ENCODE measurements at regions of chr4 and their contacts with region 1.

Region 1: DNA sequence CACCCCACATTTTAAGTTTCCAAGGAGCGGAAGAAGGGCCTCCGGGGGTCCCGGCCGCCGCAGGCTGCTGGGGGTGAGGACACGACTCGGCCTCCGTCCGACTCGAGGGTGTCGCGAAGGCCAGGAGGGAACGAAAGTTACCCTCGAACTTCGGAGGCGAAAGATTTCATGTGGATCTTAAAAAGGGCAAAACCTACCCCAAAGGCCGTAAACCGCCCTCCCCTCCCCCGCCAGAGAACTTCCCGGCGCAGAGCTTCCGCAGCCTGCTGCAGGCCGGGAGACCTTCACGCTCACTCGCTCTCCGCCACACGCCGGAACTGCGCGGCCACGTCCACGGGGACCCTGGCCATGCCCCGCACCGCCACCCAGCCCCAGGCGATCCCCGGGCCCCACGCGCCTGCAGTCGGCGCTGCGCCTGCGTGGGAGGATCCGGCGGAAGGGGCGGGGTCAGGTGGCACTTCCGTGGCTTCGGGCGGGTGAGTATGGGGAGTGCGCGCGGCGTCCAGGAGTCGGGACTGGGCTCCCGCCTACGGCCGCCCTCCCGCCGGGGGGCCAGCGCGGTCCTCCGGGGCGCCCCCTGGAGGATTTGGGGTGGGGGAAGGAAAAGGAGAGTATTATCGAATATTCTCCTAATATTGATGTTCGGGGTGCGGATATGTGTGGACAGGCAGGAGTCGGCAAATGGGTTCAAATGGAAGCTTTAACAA is at the start of gene MMAA:
- DNase-seq: peak in 1 of 2 donors; percentile 93
- H3K4me3 ChIP-seq: peak within 1 kb of the TSS; percentile 81 to 84
- H3K27ac ChIP-seq: peak within 1 kb of the TSS; percentile 93
- H3K4me1 ChIP-seq: peaks cover 8% of the 10 kb centered on the region
- H3K27me3 ChIP-seq: no peaks in the 10 kb centered on the region
- CTCF ChIP-seq: peak in 2 of 3 experiments; percentile 51 to 55
- POLR2A ChIP-seq: peak in 1 of 2 donors; percentile 91
- total RNA-seq, gene MMAA: 3.9 TPM

Region 2: GRCh38 chr4:145125396-145125795 is 493.7 kb before region 1 on chr4:
- intact Hi-C with region 1: no loop called
- DNase-seq: no peak
- H3K4me3 ChIP-seq: no peak overlapping the region
- H3K27ac ChIP-seq: no peak overlapping the region
- H3K4me1 ChIP-seq: no peaks in the 10 kb centered on the region
- H3K27me3 ChIP-seq: no peaks in the 10 kb centered on the region
- CTCF ChIP-seq: no peak
- POLR2A ChIP-seq: no peak

Region 3: DNA sequence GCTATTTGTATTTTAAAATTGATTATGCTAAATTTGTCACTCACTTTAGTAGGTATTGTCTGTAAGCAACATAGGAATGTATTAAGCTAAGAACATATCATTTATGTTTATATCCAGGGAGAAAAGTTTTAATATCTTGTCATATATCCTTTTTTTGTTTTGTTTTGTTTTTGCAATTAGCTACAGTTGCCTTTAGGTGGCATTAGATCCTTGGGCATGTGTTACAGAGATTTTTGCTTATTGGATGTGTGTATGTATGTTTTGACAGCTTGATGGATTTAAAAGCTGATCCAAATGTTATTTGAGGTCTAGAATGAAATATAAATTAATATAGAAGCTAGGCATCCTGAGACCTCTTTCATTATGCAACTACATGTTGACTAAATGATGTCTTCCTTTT is 402.6 kb before region 1 on chr4:
- intact Hi-C with region 1: loop called (anchors 10 kb)
- DNase-seq: no peak
- H3K4me3 ChIP-seq: no peak overlapping the region
- H3K27ac ChIP-seq: no peak overlapping the region
- H3K4me1 ChIP-seq: no peaks in the 10 kb centered on the region
- H3K27me3 ChIP-seq: no peaks in the 10 kb centered on the region
- CTCF ChIP-seq: no peak
- POLR2A ChIP-seq: no peak

Region 4: GRCh38 chr4:145732895-145733880 is 114.1 kb after region 1 on chr4:
- intact Hi-C with region 1: loop called (anchors 10 kb)
- DNase-seq: no peak
- H3K4me3 ChIP-seq: peak overlapping the region; percentile 60 to 75
- H3K27ac ChIP-seq: peak overlapping the region; percentile 92
- H3K4me1 ChIP-seq: peaks cover 38% of the 10 kb centered on the region
- H3K27me3 ChIP-seq: no peaks in the 10 kb centered on the region
- CTCF ChIP-seq: no peak
- POLR2A ChIP-seq: peak; percentile 34 to 59